Transverse colon (tissue), 4 donors: ENCODE measurements at regions of chr5 and their contacts with region 1.

Region 1: GRCh38 chr5:101942321-101943215 is 353.5 kb downstream of the SLCO4C1 start:
- DNase-seq: peak; percentile 12
- H3K4me3 ChIP-seq: no peak overlapping the region
- H3K27ac ChIP-seq: no peak overlapping the region
- H3K4me1 ChIP-seq: no peaks in the 10 kb centered on the region
- H3K27me3 ChIP-seq: no peaks in the 10 kb centered on the region
- CTCF ChIP-seq: peak; percentile 35 to 63 (median 53)
- EP300 ChIP-seq: no peak
- POLR2A ChIP-seq: no peak

Region 2: GRCh38 chr5:101877451-101877850 is 65.1 kb before region 1 on chr5:
- in situ Hi-C with region 1: no loop called
- intact Hi-C with region 1: no loop called
- DNase-seq: no peak
- H3K4me3 ChIP-seq: no peak overlapping the region
- H3K27ac ChIP-seq: no peak overlapping the region
- H3K4me1 ChIP-seq: no peaks in the 10 kb centered on the region
- H3K27me3 ChIP-seq: no peaks in the 10 kb centered on the region
- CTCF ChIP-seq: no peak
- EP300 ChIP-seq: no peak
- POLR2A ChIP-seq: no peak

Region 3: DNA sequence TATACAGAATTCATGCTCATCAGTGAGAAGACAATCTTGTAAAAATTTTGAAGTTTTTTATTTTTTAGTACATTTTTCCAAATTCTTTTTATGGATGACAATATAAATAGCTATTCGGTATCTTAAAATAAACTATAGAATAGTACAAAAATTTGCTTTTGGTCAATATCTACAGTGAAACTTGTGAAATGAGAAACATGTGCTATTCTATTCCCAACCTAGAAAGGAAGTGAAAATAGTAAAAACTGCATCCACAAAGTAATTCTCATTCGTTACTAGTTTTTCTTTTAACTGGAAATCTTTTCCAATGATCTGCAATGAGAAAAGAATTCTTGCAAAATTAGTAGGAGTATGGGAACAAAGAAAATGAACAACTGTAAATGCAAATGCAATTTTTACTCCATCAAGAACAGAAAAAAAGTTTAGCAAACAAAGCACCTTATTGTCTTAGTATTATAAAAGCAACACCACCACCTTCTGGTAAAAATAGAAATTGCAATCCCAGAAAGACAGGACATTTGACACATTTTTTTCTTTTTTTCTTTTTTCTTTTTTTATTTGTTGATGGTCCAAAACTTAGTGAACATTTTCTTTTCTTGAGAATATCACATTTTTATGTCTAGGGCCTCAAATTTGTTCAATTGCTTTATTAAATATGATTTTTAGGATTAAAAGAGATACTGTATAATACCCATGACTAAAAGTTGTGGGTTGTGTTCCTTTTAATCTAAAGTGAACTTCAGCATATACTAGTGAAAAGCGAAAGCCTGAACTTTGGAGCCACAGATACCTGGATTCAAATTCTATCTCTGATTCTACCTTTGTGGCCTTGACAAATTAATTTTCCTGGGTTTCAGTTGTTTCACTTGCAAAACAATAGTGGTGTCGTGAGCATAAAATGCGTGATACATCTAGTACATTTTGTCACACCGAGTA is 281.2 kb after region 1 on chr5:
- in situ Hi-C with region 1: loop called in 2 of 4 experiments (anchors 10 kb)
- intact Hi-C with region 1: no loop called
- DNase-seq: no peak
- H3K4me3 ChIP-seq: no peak overlapping the region
- H3K27ac ChIP-seq: no peak overlapping the region
- H3K4me1 ChIP-seq: peaks cover 0 to 9% (median under 1%) of the 10 kb centered on the region in 4 donors
- H3K27me3 ChIP-seq: no peaks in the 10 kb centered on the region
- CTCF ChIP-seq: peak; percentile 58 to 75 (median 72)
- EP300 ChIP-seq: no peak
- POLR2A ChIP-seq: no peak